Psoas muscle (tissue), 8 donors: ENCODE measurements at regions of chr15 and their contacts with region 1.

Region 1: GRCh38 chr15:85089929-85090597 is 108.4 kb downstream of the PDE8A start:
- DNase-seq: no peak
- ATAC-seq: no peak
- H3K4me3 ChIP-seq: no peak overlapping the region
- H3K27ac ChIP-seq: no peak overlapping the region
- H3K4me1 ChIP-seq: no peaks in the 10 kb centered on the region
- H3K27me3 ChIP-seq: no peaks in the 10 kb centered on the region
- CTCF ChIP-seq: no peak

Region 2: DNA sequence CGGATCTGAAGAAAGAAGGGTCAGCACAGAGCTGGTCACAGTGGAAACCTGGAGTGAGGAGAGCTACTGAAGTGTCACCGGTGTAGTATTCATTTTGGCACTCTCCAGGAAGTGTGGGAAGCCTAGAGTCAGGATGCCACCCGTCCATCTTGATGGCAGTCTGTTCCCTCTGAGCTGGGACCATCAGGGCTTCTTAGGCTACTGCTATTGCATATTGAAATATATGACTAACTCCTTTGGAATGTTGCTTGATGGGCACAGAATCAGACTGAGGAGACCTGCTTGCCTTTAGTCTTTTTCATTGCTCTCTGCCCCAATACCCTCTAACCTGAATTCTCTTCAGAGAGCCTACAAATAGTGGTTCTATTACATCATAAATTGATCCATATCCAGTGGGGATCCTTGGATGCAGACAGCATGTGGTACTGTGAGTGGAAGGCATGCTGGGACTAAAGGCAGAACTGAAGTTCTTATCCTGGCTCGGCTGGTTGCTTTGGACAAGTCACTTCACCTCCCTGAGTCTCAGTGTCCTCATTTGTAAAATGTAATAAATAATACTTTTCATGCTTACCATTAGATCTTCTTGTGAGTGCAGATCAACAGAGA is 35.1 kb after region 1 on chr15:
- intact Hi-C with region 1: loop called in 1 of 2 experiments (anchors 5 kb)
- DNase-seq: no peak
- ATAC-seq: no peak
- H3K4me3 ChIP-seq: no peak overlapping the region
- H3K27ac ChIP-seq: no peak overlapping the region
- H3K4me1 ChIP-seq: no peaks in the 10 kb centered on the region
- H3K27me3 ChIP-seq: no peaks in the 10 kb centered on the region
- CTCF ChIP-seq: no peak

Region 3: DNA sequence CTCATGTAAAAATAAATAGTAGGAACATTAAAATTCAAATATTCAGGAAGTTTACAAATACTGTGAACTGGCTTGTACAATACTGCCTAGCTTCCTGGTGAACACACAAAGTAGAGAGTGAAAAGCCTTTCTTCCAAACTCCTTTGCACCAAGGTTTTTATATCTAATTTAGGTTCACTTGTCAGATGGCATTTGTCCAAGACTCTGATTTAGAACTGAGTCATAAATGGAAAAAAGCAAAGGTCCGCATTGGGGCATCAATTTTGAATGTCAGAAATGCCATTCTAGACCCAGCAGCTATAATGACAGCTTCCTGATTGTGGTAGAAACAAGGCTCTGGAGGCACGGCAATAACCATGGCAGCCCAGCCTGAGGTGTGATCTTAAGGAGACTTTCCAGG is 52.2 kb after region 1 on chr15:
- intact Hi-C with region 1: no loop called
- DNase-seq: no peak
- ATAC-seq: no peak
- H3K4me3 ChIP-seq: no peak overlapping the region
- H3K27ac ChIP-seq: no peak overlapping the region
- H3K4me1 ChIP-seq: no peaks in the 10 kb centered on the region
- H3K27me3 ChIP-seq: no peaks in the 10 kb centered on the region
- CTCF ChIP-seq: no peak

Region 4: DNA sequence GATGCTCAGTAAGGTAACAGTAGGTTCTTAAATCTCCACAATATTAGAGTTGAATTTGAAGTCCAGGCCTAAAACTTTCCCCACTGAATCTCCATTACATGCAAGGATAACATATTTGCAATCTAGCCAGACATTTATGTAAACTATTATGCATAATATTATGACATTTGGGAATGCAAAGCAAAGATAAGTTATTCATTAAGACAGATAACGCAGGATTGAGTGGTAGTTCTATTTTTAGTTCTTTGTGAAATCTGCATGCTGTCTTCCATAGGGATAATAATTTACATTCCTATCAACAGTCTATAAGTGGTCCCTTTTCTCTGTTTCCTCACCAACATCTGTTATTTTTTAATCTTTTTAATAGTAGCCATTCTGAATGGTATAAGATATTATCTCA is 1323.1 kb after region 1 on chr15:
- intact Hi-C with region 1: no loop called
- DNase-seq: no peak
- ATAC-seq: no peak
- H3K4me3 ChIP-seq: no peak overlapping the region
- H3K27ac ChIP-seq: no peak overlapping the region
- H3K4me1 ChIP-seq: no peaks in the 10 kb centered on the region
- H3K27me3 ChIP-seq: no peaks in the 10 kb centered on the region
- CTCF ChIP-seq: no peak